Transverse colon (tissue), 4 donors: ENCODE measurements at regions of chr5 and their contacts with region 1.

Region 1: DNA sequence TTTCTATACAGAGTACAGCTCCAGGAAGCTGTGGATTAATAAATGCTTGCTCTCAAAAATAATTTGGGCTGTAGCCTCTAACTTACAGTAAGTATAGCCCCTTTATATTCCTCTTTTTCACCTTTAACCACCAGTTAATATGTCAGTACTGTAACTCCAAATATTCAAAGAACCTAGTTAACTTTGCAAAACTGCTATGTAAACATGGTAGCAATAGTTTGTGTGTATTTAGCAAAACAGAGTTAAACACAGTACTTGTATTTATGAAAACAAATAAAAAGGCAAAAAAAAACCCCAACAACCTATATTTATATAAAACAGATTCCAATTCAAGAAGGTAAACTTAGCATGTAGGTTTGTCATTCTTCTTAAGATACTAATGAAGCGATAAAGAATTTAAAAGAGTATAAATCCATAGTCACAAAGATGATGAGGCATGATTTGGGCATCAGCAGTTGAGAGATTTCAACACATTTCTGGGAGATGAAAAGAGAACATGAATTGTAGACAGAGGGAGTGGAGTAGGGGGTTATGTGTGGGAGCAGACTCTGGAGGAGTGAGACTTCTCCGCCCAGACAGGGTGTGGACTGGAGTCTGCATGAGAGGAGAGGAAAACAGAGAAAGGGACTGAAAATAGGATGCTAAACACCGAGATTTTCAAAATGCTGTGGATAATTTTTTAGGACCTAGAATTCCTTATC is 47.0 kb upstream of the F2RL1 start:
- DNase-seq: no peak
- H3K4me3 ChIP-seq: no peak overlapping the region
- H3K27ac ChIP-seq: no peak overlapping the region
- H3K4me1 ChIP-seq: peaks cover 0 to 3% (median 0%) of the 10 kb centered on the region in 4 donors
- H3K27me3 ChIP-seq: no peaks in the 10 kb centered on the region
- CTCF ChIP-seq: no peak
- EP300 ChIP-seq: no peak
- POLR2A ChIP-seq: no peak

Region 2: DNA sequence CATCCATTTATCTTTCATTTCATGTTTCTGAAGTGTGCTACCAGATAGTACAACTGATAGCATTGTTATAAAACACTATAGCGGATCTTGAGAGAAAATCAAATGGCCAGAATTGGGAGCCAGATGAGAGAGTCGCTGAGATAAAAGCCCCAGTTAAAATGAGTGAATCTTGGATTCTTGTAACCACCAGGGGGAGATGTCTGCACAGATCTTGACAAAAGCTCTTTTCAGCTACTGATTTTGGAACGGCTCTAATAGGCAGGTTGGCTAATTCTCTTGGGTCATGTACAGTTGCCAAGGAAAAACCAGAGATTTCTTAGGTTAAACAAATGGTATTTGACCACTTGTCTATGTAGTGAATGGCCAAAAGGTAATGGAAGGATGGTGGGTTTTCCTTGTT is 170.4 kb before region 1 on chr5:
- in situ Hi-C with region 1: loop called in 3 of 4 experiments (anchors 5 to 10 kb)
- intact Hi-C with region 1: loop called (anchors 10 kb)
- DNase-seq: no peak
- H3K4me3 ChIP-seq: no peak overlapping the region
- H3K27ac ChIP-seq: no peak overlapping the region
- H3K4me1 ChIP-seq: peaks cover 0 to 7% (median 0%) of the 10 kb centered on the region in 4 donors
- H3K27me3 ChIP-seq: no peaks in the 10 kb centered on the region
- CTCF ChIP-seq: peak; percentile 57 to 75 (median 72)
- EP300 ChIP-seq: no peak
- POLR2A ChIP-seq: no peak

Region 3: GRCh38 chr5:76715736-76716455 is 56.0 kb before region 1 on chr5 and contains the start of gene F2R:
- in situ Hi-C with region 1: loop called in 1 of 4 experiments (anchors 10 kb)
- intact Hi-C with region 1: no loop called
- DNase-seq: peak; percentile 62
- H3K4me3 ChIP-seq: peak within 1 kb of the TSS; percentile 55 to 92 (median 77)
- H3K27ac ChIP-seq: peak within 1 kb of the TSS; percentile 55 to 68 (median 66)
- H3K4me1 ChIP-seq: peaks cover 0 to 25% (median 5%) of the 10 kb centered on the region in 4 donors
- H3K27me3 ChIP-seq: peaks cover 31% of the 10 kb centered on the region
- CTCF ChIP-seq: peak in 4 of 5 experiments; percentile 43 to 58 (median 47)
- EP300 ChIP-seq: no peak
- POLR2A ChIP-seq: no peak
- total RNA-seq, gene F2R: 0.75 to 10.7 (median 6.8) TPM